ENCODE measurements at regions of chr5 and their contacts with region 1.

Region 1: DNA sequence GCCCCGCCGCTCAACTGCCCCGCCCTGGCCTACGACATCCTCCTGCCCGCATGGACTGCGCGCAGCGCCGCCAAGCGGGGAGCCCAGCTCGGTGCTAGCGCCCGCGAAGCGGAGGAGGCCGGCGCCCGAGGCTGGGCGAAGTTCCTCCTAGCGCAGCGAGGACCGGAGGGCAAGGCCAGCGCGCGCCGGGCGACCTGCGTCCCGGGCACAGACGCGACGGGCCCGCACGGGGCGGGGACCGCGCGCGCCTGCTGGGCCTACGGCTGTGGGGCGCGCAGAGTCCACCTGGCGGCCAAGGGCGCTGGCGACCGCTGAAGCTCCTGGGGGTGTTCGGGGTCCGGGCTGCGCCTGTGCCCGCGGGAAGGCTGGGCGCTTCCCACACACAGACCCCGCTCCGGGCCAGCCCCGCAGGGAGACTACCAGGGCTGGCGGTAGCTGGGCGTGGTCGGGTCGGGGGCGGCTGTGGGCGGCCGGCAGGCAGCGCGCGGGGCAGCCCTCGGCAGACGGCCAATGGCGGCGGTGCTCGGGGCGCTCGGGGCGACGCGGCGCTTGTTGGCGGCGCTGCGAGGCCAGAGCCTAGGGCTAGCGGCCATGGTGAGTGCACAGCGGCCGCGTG is at the start of gene PCBD2:
- DNase-seq: peak; percentile 89
- CTCF ChIP-seq: peak; percentile 95

Region 2: GRCh38 chr5:134586866-134587524 is 317.7 kb before region 1 on chr5:
- CTCF ChIA-PET with region 1: interaction called, 15 read pairs
- POLR2A ChIA-PET with region 1: no interaction called
- DNase-seq: peak; percentile 83
- CTCF ChIP-seq: peak; percentile 92

Region 3: GRCh38 chr5:134758504-134759341 is 146.0 kb before region 1 on chr5 and contains the start of gene DDX46:
- CTCF ChIA-PET with region 1: interaction called, 14 read pairs
- POLR2A ChIA-PET with region 1: no interaction called
- DNase-seq: peak; percentile 97
- CTCF ChIP-seq: peak; percentile 95

Region 4: GRCh38 chr5:134873987-134874830 is 30.5 kb before region 1 on chr5 and contains the start of gene TXNDC15:
- CTCF ChIA-PET with region 1: interaction called, 13 read pairs
- POLR2A ChIA-PET with region 1: no interaction called
- DNase-seq: peak; percentile 91
- CTCF ChIP-seq: no peak

Region 5: DNA sequence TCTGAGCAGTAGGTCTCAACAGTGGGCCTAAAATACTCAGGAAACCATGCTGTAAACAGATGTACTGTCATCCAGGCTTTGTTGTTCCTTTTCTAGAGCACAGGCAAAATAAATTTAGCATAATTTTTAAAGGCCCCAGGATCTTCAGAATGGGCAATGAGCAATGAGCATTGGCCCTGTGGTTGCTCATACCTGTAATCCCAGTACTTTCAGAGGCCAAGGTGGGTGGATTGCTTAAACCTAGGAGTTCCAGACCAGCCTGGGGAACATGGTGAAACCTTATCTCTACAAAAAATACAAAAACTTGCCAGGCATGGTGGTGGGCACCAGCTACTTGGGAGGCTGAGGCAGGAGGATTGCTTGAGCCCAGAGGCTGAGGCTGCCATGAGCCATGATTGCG is 13.3 kb before region 1 on chr5:
- CTCF ChIA-PET with region 1: interaction called, 22 read pairs
- POLR2A ChIA-PET with region 1: interaction called, 5 read pairs
- DNase-seq: no peak
- CTCF ChIP-seq: no peak

Region 6: GRCh38 chr5:134935711-134936602 is 31.2 kb after region 1 on chr5:
- CTCF ChIA-PET with region 1: no interaction called
- POLR2A ChIA-PET with region 1: no interaction called
- DNase-seq: no peak
- CTCF ChIP-seq: no peak

Region 7: GRCh38 chr5:135116160-135116561 is 211.4 kb after region 1 on chr5:
- CTCF ChIA-PET with region 1: no interaction called
- POLR2A ChIA-PET with region 1: no interaction called
- DNase-seq: no peak
- CTCF ChIP-seq: no peak

Measured in GM10248 (cell line).